Activated CD4-positive, alpha-beta memory T cell treated with anti-CD3 and anti-CD28 coated beads for 36 hours (primary cell): ENCODE measurements at regions of chr12 and their contacts with region 1.

Region 1: DNA sequence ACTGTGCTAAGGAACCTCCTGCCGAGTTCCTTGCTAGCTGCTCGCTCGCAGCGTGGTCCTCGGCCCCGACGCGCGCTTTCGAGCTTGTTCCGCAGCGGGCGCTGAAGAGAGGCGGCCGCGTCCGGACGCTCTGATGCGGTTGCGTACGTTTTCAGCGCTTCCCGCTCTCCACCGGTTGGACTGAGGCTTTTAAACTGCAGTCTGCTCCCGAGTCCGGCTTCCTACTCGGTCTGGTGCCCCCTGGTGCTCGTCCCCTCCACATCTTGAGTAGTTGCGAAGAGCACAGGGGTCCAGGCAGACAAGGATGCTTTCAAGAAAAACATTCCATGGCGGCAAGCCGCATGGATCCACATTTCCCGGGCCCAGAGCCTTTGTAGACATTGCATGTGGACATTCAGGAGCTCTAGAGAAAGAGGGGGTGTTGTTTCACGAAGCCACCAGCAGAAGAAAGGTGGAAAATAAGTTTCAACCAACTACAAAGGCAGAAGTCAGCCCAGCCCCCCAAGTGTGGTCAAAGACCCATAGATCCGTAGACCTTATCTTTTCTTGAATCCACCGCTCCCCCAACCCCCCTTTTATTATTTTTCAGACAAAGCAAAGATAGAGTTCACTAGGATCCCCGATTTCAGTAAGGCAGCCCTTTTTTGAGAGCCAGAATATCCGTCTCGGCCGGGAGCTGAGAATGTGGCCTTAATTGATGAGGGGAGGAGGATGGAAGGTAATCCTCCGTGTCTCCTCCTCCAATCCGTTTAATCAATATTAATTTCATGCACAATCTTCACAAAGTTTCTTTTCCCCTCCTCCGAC is 984 bp upstream of the WNK1 start:
- DNase-seq: peak; percentile 94
- H3K4me3 Mint-ChIP-seq: no peak overlapping the region
- H3K27ac Mint-ChIP-seq: no peak overlapping the region
- H3K4me1 Mint-ChIP-seq: peaks cover 16% of the 10 kb centered on the region
- H3K27me3 Mint-ChIP-seq: no peaks in the 10 kb centered on the region

Region 2: GRCh38 chr12:569803-570434 is 181.5 kb before region 1 on chr12:
- CTCF ChIA-PET with region 1: interaction called, 119 read pairs
- POLR2A ChIA-PET with region 1: interaction called, 27 read pairs
- intact Hi-C with region 1: no loop called
- DNase-seq: peak; percentile 90
- H3K4me3 Mint-ChIP-seq: peak overlapping the region; percentile 79
- H3K27ac Mint-ChIP-seq: no peak overlapping the region
- H3K4me1 Mint-ChIP-seq: peaks cover 48% of the 10 kb centered on the region
- H3K27me3 Mint-ChIP-seq: no peaks in the 10 kb centered on the region

Region 3: GRCh38 chr12:642633-643474 is 108.5 kb before region 1 on chr12:
- CTCF ChIA-PET with region 1: interaction called, 35 read pairs
- POLR2A ChIA-PET with region 1: interaction called, 7 read pairs
- intact Hi-C with region 1: loop called (anchors 1 kb)
- DNase-seq: peak; percentile 86
- H3K4me3 Mint-ChIP-seq: peak overlapping the region; percentile 74
- H3K27ac Mint-ChIP-seq: peak overlapping the region; percentile 96
- H3K4me1 Mint-ChIP-seq: peaks cover 57% of the 10 kb centered on the region
- H3K27me3 Mint-ChIP-seq: no peaks in the 10 kb centered on the region

Region 4: DNA sequence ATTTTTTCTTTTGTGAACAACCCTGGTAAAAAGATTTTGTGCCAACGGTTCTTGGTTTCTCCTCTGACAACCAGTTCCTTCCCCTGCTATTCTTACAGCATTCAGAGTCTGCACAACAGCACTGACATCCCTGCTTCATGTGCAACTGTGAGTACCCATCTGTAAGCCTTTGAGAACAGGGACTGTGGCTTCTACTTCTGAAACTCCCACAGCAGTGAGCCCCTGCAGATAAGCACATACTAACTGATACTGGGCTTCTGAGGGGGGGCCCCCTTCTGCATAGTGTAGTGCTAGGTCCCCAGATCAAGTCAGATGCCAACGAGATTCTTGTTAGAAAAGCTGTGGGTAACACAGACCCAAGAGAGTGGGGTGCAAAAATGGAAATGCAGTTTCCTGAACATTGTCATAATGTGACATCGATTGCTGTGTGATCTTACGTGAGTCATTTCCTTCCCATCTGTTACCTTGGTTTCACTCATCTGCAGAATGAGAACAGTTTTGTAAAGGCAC is 77.1 kb before region 1 on chr12:
- CTCF ChIA-PET with region 1: interaction called, 69 read pairs
- POLR2A ChIA-PET with region 1: interaction called, 36 read pairs
- intact Hi-C with region 1: loop called (anchors 1 kb)
- DNase-seq: peak; percentile 90
- H3K4me3 Mint-ChIP-seq: peak overlapping the region; percentile 70
- H3K27ac Mint-ChIP-seq: peak overlapping the region; percentile 85
- H3K4me1 Mint-ChIP-seq: peaks cover 65% of the 10 kb centered on the region
- H3K27me3 Mint-ChIP-seq: peaks cover 8% of the 10 kb centered on the region

Region 5: GRCh38 chr12:724194-724855 is 27.1 kb before region 1 on chr12:
- CTCF ChIA-PET with region 1: interaction called, 26 read pairs
- POLR2A ChIA-PET with region 1: interaction called, 3 read pairs
- intact Hi-C with region 1: loop called (anchors 2 kb)
- DNase-seq: peak; percentile 44
- H3K4me3 Mint-ChIP-seq: no peak overlapping the region
- H3K27ac Mint-ChIP-seq: peak overlapping the region; percentile 10
- H3K4me1 Mint-ChIP-seq: peaks cover 67% of the 10 kb centered on the region
- H3K27me3 Mint-ChIP-seq: no peaks in the 10 kb centered on the region

Region 6: DNA sequence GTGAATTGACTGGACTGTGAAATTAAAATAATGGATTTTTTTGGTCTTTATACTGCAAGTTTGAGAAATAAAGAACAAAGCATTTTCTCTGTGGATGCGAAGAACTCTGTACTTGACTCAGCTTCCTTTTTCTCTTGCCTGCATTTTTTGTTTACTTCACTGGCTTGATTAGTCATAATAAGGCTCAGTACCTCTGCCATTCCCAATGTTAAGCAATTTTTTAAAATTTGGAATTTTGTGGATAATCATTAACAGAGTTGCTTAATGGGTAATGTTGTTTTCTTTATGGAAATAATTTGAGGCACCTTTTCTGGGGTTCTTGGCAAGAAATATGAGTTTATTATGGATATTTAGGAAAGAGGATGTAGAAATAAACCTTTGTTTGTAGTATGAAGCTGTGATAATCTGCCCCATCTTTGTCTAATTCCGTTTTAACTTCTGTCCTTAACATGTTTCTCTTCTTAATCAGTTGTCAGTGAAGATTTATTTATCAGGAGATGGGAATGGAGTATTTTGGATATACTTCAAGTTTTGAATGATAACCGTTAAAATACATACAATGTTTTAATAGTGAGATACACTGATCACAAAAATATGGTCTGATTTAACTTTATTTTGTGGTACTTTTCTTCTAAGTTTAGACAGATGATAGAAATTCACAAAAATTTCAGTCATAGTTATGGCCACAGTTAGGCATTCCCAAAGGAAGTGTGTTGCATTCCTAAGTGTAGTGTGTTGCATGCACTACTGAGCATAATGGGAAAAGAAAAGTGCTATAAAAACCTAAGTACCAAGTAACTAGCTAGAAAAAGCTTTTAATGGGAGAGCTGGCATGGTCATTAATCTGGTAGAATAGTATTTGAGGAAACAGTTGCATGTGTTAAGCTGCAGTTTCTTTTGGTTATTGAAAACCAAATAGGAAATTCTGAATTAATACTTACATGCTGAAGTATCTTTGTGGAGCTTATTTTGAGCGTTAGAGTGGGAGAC is 28.6 kb after region 1 on chr12:
- CTCF ChIA-PET with region 1: interaction called, 26 read pairs
- POLR2A ChIA-PET with region 1: interaction called, 3 read pairs
- intact Hi-C with region 1: loop called (anchors 2 kb)
- DNase-seq: no peak
- H3K4me3 Mint-ChIP-seq: peak overlapping the region; percentile 62
- H3K27ac Mint-ChIP-seq: peak overlapping the region; percentile 47
- H3K4me1 Mint-ChIP-seq: peaks cover 72% of the 10 kb centered on the region
- H3K27me3 Mint-ChIP-seq: no peaks in the 10 kb centered on the region

Region 7: GRCh38 chr12:810671-811415 is 59.4 kb after region 1 on chr12:
- CTCF ChIA-PET with region 1: interaction called, 123 read pairs
- POLR2A ChIA-PET with region 1: interaction called, 8 read pairs
- intact Hi-C with region 1: loop called (anchors 1 kb)
- DNase-seq: peak; percentile 86
- H3K4me3 Mint-ChIP-seq: peak overlapping the region; percentile 8
- H3K27ac Mint-ChIP-seq: peak overlapping the region; percentile 15
- H3K4me1 Mint-ChIP-seq: peaks cover 70% of the 10 kb centered on the region
- H3K27me3 Mint-ChIP-seq: no peaks in the 10 kb centered on the region

Region 8: DNA sequence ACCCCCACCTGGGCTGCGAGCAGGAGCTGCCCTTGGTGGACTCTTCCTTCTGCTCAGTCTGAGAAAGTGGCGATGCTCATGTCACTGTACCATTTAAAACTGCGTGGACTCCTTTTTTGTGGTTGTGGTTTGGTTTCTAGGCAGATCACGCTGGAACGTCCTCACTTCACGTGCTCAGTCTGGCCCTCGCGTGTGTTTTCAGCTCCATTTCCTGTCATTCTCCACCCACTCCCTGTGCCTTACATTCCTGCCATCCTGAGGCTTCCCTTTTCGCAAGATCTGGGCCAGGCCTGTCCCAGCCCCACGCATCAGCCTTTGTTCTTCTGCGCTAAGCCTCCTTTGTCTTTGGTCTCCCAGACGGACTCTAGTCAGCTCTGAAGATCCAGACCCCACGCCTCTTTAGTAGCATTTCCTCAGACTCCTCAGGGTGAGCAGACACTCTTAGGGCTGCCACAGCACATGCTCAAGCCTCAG is 737.5 kb after region 1 on chr12:
- CTCF ChIA-PET with region 1: no interaction called
- POLR2A ChIA-PET with region 1: no interaction called
- intact Hi-C with region 1: no loop called
- DNase-seq: peak; percentile 15
- H3K4me3 Mint-ChIP-seq: no peak overlapping the region
- H3K27ac Mint-ChIP-seq: no peak overlapping the region
- H3K4me1 Mint-ChIP-seq: peaks cover 14% of the 10 kb centered on the region
- H3K27me3 Mint-ChIP-seq: no peaks in the 10 kb centered on the region

Region 9: GRCh38 chr12:2004113-2004929 is 1252.9 kb after region 1 on chr12 and contains the start of gene DCP1B:
- CTCF ChIA-PET with region 1: no interaction called
- POLR2A ChIA-PET with region 1: no interaction called
- intact Hi-C with region 1: no loop called
- DNase-seq: peak; percentile 98
- H3K4me3 Mint-ChIP-seq: peak within 1 kb of the TSS; percentile 100
- H3K27ac Mint-ChIP-seq: peak within 1 kb of the TSS; percentile 97
- H3K4me1 Mint-ChIP-seq: peaks cover 31% of the 10 kb centered on the region
- H3K27me3 Mint-ChIP-seq: no peaks in the 10 kb centered on the region
- total RNA-seq, gene DCP1B: 13.1 to 13.4 TPM